ENCODE measurements at regions of chr19 and their contacts with region 1.

Region 1: GRCh38 chr19:11293433-11294389 is 2.2 kb upstream of the TSPAN16 start:
- DNase-seq: peak; percentile 81 to 98 (median 94)
- ATAC-seq: peak; percentile 99 to 100 (median 99)
- H3K4me3 ChIP-seq: peak overlapping the region in 1 of 4 donors; percentile 30
- H3K27ac ChIP-seq: peak overlapping the region in 1 of 4 donors; percentile 37
- H3K4me1 ChIP-seq: no peaks in the 10 kb centered on the region
- H3K27me3 ChIP-seq: no peaks in the 10 kb centered on the region
- CTCF ChIP-seq: peak; percentile 84 to 96 (median 96)

Region 2: GRCh38 chr19:11169896-11170678 is 123.6 kb before region 1 on chr19:
- intact Hi-C with region 1: no loop called
- DNase-seq: peak in 1 of 6 donors; percentile 62
- ATAC-seq: no peak
- H3K4me3 ChIP-seq: no peak overlapping the region
- H3K27ac ChIP-seq: no peak overlapping the region
- H3K4me1 ChIP-seq: no peaks in the 10 kb centered on the region
- H3K27me3 ChIP-seq: no peaks in the 10 kb centered on the region
- CTCF ChIP-seq: no peak

Region 3: GRCh38 chr19:11335449-11336146 is 41.9 kb after region 1 on chr19:
- intact Hi-C with region 1: no loop called
- DNase-seq: no peak
- ATAC-seq: no peak
- H3K4me3 ChIP-seq: no peak overlapping the region
- H3K27ac ChIP-seq: no peak overlapping the region
- H3K4me1 ChIP-seq: peaks cover 0 to 5% (median 4%) of the 10 kb centered on the region in 3 donors
- H3K27me3 ChIP-seq: no peaks in the 10 kb centered on the region
- CTCF ChIP-seq: no peak

Region 4: GRCh38 chr19:11446652-11447301 is 153.1 kb after region 1 on chr19:
- intact Hi-C with region 1: loop called in 2 of 3 experiments (anchors 10 kb)
- DNase-seq: peak in 4 of 6 donors; percentile 63 to 89 (median 80)
- ATAC-seq: peak; percentile 70 to 91 (median 83)
- H3K4me3 ChIP-seq: no peak overlapping the region
- H3K27ac ChIP-seq: no peak overlapping the region
- H3K4me1 ChIP-seq: no peaks in the 10 kb centered on the region
- H3K27me3 ChIP-seq: no peaks in the 10 kb centered on the region
- CTCF ChIP-seq: peak; percentile 44 to 71 (median 62)

Region 5: GRCh38 chr19:11482384-11483050 is 188.8 kb after region 1 on chr19:
- intact Hi-C with region 1: loop called in 1 of 3 experiments (anchors 10 kb)
- DNase-seq: peak; percentile 58 to 91 (median 76)
- ATAC-seq: peak; percentile 84 to 92 (median 89)
- H3K4me3 ChIP-seq: peak overlapping the region in 1 of 4 donors; percentile 35
- H3K27ac ChIP-seq: no peak overlapping the region
- H3K4me1 ChIP-seq: peaks cover 0 to 17% (median 14%) of the 10 kb centered on the region in 3 donors
- H3K27me3 ChIP-seq: peaks cover 0 to 15% (median 5%) of the 10 kb centered on the region in 4 donors
- CTCF ChIP-seq: peak; percentile 86 to 92 (median 88)

Measured in pancreas (tissue), 10 donors.